Prostate gland (tissue), 2 donors: ENCODE measurements at regions of chr2 and their contacts with region 1.

Region 1: GRCh38 chr2:29115797-29116781 is 874 bp downstream of the CLIP4 start:
- DNase-seq: peak; percentile 72
- H3K4me3 ChIP-seq: peak overlapping the region; percentile 60 to 76
- H3K27ac ChIP-seq: peak overlapping the region; percentile 80 to 89
- H3K4me1 ChIP-seq: peaks cover 4% of the 10 kb centered on the region
- H3K27me3 ChIP-seq: no peaks in the 10 kb centered on the region
- CTCF ChIP-seq: no peak
- POLR2A ChIP-seq: peak; percentile 26

Region 2: GRCh38 chr2:29014811-29015421 is 101.2 kb before region 1 on chr2:
- intact Hi-C with region 1: loop called (anchors 10 kb)
- DNase-seq: no peak
- H3K4me3 ChIP-seq: no peak overlapping the region
- H3K27ac ChIP-seq: peak overlapping the region in 1 of 2 donors; percentile 15
- H3K4me1 ChIP-seq: no peaks in the 10 kb centered on the region
- H3K27me3 ChIP-seq: no peaks in the 10 kb centered on the region
- CTCF ChIP-seq: no peak
- POLR2A ChIP-seq: no peak